B cell (primary cell): ENCODE measurements at regions of chr10 and their contacts with region 1.

Region 1: GRCh38 chr10:119686439-119687191 is 35.4 kb downstream of the BAG3 start:
- DNase-seq: peak; percentile 90
- ATAC-seq: peak; percentile 91
- H3K4me3 ChIP-seq: peak overlapping the region in 4 of 5 experiments; percentile 31 to 63 (median 46)
- H3K4me3 Mint-ChIP-seq: peak overlapping the region; percentile 82
- H3K27ac ChIP-seq: no peak overlapping the region
- H3K27ac Mint-ChIP-seq: peak overlapping the region; percentile 72
- H3K4me1 ChIP-seq: peaks cover 14 to 26% of the 10 kb centered on the region in 2 donors
- H3K4me1 Mint-ChIP-seq: peaks cover 32% of the 10 kb centered on the region
- H3K27me3 ChIP-seq: no peaks in the 10 kb centered on the region
- H3K27me3 Mint-ChIP-seq: peaks cover 5% of the 10 kb centered on the region
- CTCF ChIP-seq: peak; percentile 95

Region 2: GRCh38 chr10:118875087-118875486 is 811.5 kb before region 1 on chr10:
- CTCF ChIA-PET with region 1: no interaction called
- POLR2A ChIA-PET with region 1: no interaction called
- intact Hi-C with region 1: no loop called
- DNase-seq: no peak
- ATAC-seq: no peak
- H3K4me3 ChIP-seq: no peak overlapping the region
- H3K4me3 Mint-ChIP-seq: no peak overlapping the region
- H3K27ac ChIP-seq: no peak overlapping the region
- H3K27ac Mint-ChIP-seq: no peak overlapping the region
- H3K4me1 ChIP-seq: no peaks in the 10 kb centered on the region
- H3K4me1 Mint-ChIP-seq: no peaks in the 10 kb centered on the region
- H3K27me3 ChIP-seq: peaks cover 0 to 13% (median 3%) of the 10 kb centered on the region in 4 experiments
- H3K27me3 Mint-ChIP-seq: peaks cover 50% of the 10 kb centered on the region
- CTCF ChIP-seq: no peak

Region 3: DNA sequence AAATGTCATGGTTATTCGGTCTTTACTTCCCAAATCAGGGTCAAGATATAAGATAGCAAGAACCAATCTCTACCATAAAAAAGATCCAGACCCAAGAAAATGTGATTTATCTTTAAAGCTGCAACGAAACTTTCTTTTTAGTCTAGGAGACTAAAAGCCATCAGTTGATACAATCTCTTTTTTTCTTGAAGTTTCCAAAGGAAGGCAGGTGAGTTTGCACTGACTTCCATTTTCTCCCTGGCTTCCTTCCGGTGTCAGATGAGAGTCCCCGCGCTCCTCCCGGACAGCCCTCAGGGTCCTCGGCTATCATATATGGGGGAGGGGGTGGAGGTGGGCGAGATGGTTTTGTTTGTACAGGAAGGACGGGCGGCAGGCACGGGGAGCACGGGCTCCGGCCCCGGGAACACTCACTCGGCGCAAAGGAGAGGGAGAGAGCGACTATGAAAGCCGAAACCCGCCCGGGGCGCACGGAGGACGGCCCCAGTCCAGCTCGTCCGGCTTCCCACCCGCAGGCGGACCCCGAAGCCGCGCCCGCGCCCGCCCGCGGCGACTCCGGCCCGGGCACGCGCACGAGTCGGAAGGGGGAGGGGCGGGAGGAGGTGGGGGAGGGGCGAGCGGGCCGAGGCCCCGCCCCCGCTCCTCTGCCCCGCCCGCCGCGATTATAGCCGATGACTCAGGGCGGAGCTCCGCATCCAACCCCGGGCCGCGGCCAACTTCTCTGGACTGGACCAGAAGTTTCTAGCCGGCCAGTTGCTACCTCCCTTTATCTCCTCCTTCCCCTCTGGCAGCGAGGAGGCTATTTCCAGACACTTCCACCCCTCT is 35.7 kb before region 1 on chr10 and contains the start of gene BAG3:
- CTCF ChIA-PET with region 1: interaction called, 4 read pairs
- POLR2A ChIA-PET with region 1: no interaction called
- intact Hi-C with region 1: loop called (anchors 5 kb)
- DNase-seq: peak; percentile 85
- ATAC-seq: peak; percentile 94
- H3K4me3 ChIP-seq: peak within 1 kb of the TSS; percentile 82 to 96 (median 93)
- H3K4me3 Mint-ChIP-seq: peak within 1 kb of the TSS; percentile 97
- H3K27ac ChIP-seq: peak within 1 kb of the TSS; percentile 82 to 85
- H3K27ac Mint-ChIP-seq: peak within 1 kb of the TSS; percentile 94
- H3K4me1 ChIP-seq: peaks cover 3 to 12% of the 10 kb centered on the region in 2 donors
- H3K4me1 Mint-ChIP-seq: peaks cover 17% of the 10 kb centered on the region
- H3K27me3 ChIP-seq: peaks cover 0 to 3% (median 0%) of the 10 kb centered on the region in 4 experiments
- H3K27me3 Mint-ChIP-seq: no peaks in the 10 kb centered on the region
- CTCF ChIP-seq: no peak
- total RNA-seq, gene BAG3: 3.9 and 4.2 TPM in 2 replicates

Region 4: GRCh38 chr10:119715628-119716505 is 29.3 kb after region 1 on chr10:
- CTCF ChIA-PET with region 1: interaction called, 48 read pairs
- POLR2A ChIA-PET with region 1: interaction called, 4 read pairs
- intact Hi-C with region 1: loop called (anchors 1 kb)
- DNase-seq: no peak
- ATAC-seq: no peak
- H3K4me3 ChIP-seq: no peak overlapping the region
- H3K4me3 Mint-ChIP-seq: no peak overlapping the region
- H3K27ac ChIP-seq: no peak overlapping the region
- H3K27ac Mint-ChIP-seq: peak overlapping the region; percentile 46
- H3K4me1 ChIP-seq: no peaks in the 10 kb centered on the region
- H3K4me1 Mint-ChIP-seq: peaks cover 27% of the 10 kb centered on the region
- H3K27me3 ChIP-seq: no peaks in the 10 kb centered on the region
- H3K27me3 Mint-ChIP-seq: no peaks in the 10 kb centered on the region
- CTCF ChIP-seq: no peak

Region 5: DNA sequence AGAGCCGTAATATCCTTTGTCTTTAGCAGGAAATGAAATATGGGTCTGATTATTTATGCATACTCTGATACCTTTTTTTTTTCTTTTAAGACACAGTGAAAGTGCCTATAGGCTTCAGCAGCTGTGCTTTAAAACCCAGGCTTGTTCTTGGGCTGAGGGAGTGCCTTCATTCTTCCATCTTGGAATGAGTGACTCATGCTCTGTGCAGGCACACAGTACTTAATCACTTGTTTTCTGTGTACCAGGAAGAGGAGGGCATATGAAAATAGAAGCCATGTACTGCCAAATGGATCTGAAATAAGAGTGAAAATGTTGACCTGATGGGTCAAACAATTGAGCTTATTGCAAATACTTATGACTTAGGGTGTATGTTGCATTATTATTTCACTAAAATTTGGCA is 51.2 kb after region 1 on chr10:
- CTCF ChIA-PET with region 1: interaction called, 29 read pairs
- POLR2A ChIA-PET with region 1: no interaction called
- intact Hi-C with region 1: no loop called
- DNase-seq: no peak
- ATAC-seq: no peak
- H3K4me3 ChIP-seq: no peak overlapping the region
- H3K4me3 Mint-ChIP-seq: no peak overlapping the region
- H3K27ac ChIP-seq: no peak overlapping the region
- H3K27ac Mint-ChIP-seq: no peak overlapping the region
- H3K4me1 ChIP-seq: peaks cover 20 to 32% of the 10 kb centered on the region in 2 donors
- H3K4me1 Mint-ChIP-seq: peaks cover 49% of the 10 kb centered on the region
- H3K27me3 ChIP-seq: no peaks in the 10 kb centered on the region
- H3K27me3 Mint-ChIP-seq: no peaks in the 10 kb centered on the region
- CTCF ChIP-seq: no peak

Region 6: DNA sequence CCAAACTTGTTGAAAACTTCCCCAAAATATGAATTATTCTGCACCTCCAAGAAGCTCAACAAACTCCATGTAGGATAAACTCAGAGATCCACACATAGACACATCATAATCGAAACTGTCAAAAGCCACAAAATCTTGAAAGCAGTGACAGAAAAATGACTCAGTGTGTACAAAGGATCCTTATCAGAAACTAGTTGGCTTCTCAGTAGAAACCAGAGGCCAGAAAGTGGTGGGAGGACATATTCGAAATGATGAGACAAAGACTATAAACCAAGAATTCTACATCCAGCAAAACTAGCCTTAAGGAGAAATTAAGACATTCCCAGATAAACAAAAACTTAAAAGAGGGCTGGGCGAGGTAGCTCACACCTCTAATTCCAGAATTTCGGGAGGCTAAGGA is 147.6 kb after region 1 on chr10:
- CTCF ChIA-PET with region 1: interaction called, 14 read pairs
- POLR2A ChIA-PET with region 1: no interaction called
- intact Hi-C with region 1: no loop called
- DNase-seq: no peak
- ATAC-seq: no peak
- H3K4me3 ChIP-seq: no peak overlapping the region
- H3K4me3 Mint-ChIP-seq: no peak overlapping the region
- H3K27ac ChIP-seq: no peak overlapping the region
- H3K27ac Mint-ChIP-seq: peak overlapping the region; percentile 1
- H3K4me1 ChIP-seq: no peaks in the 10 kb centered on the region
- H3K4me1 Mint-ChIP-seq: no peaks in the 10 kb centered on the region
- H3K27me3 ChIP-seq: no peaks in the 10 kb centered on the region
- H3K27me3 Mint-ChIP-seq: no peaks in the 10 kb centered on the region
- CTCF ChIP-seq: no peak

Region 7: GRCh38 chr10:119859420-119860258 is 173.0 kb after region 1 on chr10:
- CTCF ChIA-PET with region 1: interaction called, 153 read pairs
- POLR2A ChIA-PET with region 1: interaction called, 3 read pairs
- intact Hi-C with region 1: loop called (anchors 1 kb)
- DNase-seq: peak; percentile 71
- ATAC-seq: peak; percentile 58
- H3K4me3 ChIP-seq: no peak overlapping the region
- H3K4me3 Mint-ChIP-seq: no peak overlapping the region
- H3K27ac ChIP-seq: peak overlapping the region in 1 of 2 donors; percentile 47
- H3K27ac Mint-ChIP-seq: no peak overlapping the region
- H3K4me1 ChIP-seq: peaks cover 3 to 7% of the 10 kb centered on the region in 2 donors
- H3K4me1 Mint-ChIP-seq: peaks cover 26% of the 10 kb centered on the region
- H3K27me3 ChIP-seq: no peaks in the 10 kb centered on the region
- H3K27me3 Mint-ChIP-seq: no peaks in the 10 kb centered on the region
- CTCF ChIP-seq: peak; percentile 83

Region 8: GRCh38 chr10:119957451-119957850 is 270.8 kb after region 1 on chr10:
- CTCF ChIA-PET with region 1: no interaction called
- POLR2A ChIA-PET with region 1: no interaction called
- intact Hi-C with region 1: no loop called
- DNase-seq: no peak
- ATAC-seq: no peak
- H3K4me3 ChIP-seq: no peak overlapping the region
- H3K4me3 Mint-ChIP-seq: no peak overlapping the region
- H3K27ac ChIP-seq: no peak overlapping the region
- H3K27ac Mint-ChIP-seq: no peak overlapping the region
- H3K4me1 ChIP-seq: no peaks in the 10 kb centered on the region
- H3K4me1 Mint-ChIP-seq: no peaks in the 10 kb centered on the region
- H3K27me3 ChIP-seq: no peaks in the 10 kb centered on the region
- H3K27me3 Mint-ChIP-seq: no peaks in the 10 kb centered on the region
- CTCF ChIP-seq: no peak